ENCODE measurements at regions of chr14 and their contacts with region 1.

Region 1: GRCh38 chr14:105020815-105021655 is at the start of gene CDCA4:
- DNase-seq: peak; percentile 96 to 98
- ATAC-seq: peak; percentile 96 to 98 (median 97)
- H3K4me3 ChIP-seq: peak within 1 kb of the TSS; percentile 71 to 94 (median 82)
- H3K27ac ChIP-seq: peak within 1 kb of the TSS; percentile 9 to 90 (median 83)
- H3K4me1 ChIP-seq: peaks cover 5 to 78% (median 30%) of the 10 kb centered on the region in 9 donors
- H3K27me3 ChIP-seq: no peaks in the 10 kb centered on the region
- CTCF ChIP-seq: no peak
- total RNA-seq, gene CDCA4: 1.5 to 6.4 (median 2.0) TPM

Region 2: GRCh38 chr14:104985675-104986525 is 35.1 kb before region 1 on chr14 and contains the start of gene CLBA1:
- intact Hi-C with region 1: loop called in 2 of 10 experiments (anchors 5 kb)
- DNase-seq: peak; percentile 85 to 92
- ATAC-seq: peak; percentile 93 to 97 (median 96)
- H3K4me3 ChIP-seq: peak within 1 kb of the TSS; percentile 59 to 98 (median 89)
- H3K27ac ChIP-seq: peak within 1 kb of the TSS in 9 of 10 donors; percentile 58 to 83 (median 74)
- H3K4me1 ChIP-seq: peaks cover 0 to 23% (median 11%) of the 10 kb centered on the region in 9 donors
- H3K27me3 ChIP-seq: no peaks in the 10 kb centered on the region
- CTCF ChIP-seq: no peak
- total RNA-seq, gene CLBA1: 1.2 to 3.1 (median 2.4) TPM